ENCODE measurements at regions of chr5 and their contacts with region 1.

Region 1: DNA sequence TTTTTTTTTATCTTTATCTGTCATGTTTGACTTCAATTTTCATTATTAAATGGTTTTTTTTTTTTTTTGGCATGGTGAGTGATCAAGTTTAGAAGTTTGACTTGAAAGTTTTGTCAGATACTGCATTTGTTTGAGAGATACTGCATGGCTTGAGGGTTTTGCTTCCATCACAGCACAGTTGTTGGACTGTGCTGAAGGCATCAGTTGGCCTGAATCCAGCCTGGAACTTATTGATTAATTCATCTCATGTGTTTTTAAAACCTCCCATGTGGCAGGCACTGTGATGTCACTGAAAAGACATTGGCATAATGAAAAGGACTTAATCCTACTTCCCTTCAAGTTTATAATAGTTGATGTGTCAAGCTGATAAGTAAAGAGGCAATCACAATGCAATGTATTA is 128.4 kb downstream of the FGF10 start:
- DNase-seq: no peak

Region 2: DNA sequence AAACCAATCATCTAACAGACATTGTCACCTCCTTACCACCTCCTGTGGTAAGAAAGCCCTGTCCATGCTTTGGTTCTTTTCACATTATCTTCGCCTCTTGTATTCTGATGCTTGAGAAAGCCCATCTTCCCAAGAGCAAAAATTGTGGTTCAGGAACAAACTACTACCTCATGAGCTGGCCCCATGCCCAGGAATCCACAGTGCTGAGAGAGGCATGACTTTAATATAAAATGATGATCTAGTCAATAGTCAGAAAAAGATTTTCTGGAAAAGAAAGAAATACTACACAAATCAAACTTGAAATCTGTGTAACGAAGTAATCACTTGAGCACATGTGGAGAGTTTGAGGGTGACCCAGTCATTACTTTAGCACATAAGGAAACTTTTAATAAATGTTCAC is 33.7 kb after region 1 on chr5:
- intact Hi-C with region 1: loop called in 1 of 2 experiments (anchors 2 kb)
- DNase-seq: no peak

Region 3: DNA sequence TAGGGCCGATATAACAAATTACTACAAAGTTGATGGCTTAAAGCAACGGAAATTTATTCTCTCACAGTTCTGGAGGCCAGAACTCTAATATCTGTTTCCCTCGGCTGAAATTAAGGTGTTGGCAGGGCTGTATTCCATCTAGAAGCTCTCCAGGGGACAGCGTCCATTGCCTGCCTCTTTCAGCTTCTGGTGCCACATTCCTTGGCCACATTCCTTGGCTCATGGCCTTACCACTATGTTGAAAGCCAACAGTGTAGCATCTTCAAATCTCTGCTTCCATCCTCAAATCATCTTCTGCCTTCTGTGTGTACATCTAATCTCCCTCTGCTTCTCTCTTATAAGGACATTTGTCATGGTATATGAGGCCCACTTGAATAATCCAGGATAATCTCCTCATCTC is 111.2 kb after region 1 on chr5:
- intact Hi-C with region 1: no loop called
- DNase-seq: no peak